Activated T-helper 1 cell treated with anti-CD3 and anti-CD28 coated beads, Interleukin-12 subunit alpha, Interleukin-12 subunit beta, Interleukin-2, Interleukin-4 antibody, amounts not matched to agents 30 ng/mL and 10 ng/mL and 1 ng/mL, durations not matched to agents 14 hours and 24 hours and 36 hours (primary cell): ENCODE measurements at regions of chr4 and their contacts with region 1.

Region 1: DNA sequence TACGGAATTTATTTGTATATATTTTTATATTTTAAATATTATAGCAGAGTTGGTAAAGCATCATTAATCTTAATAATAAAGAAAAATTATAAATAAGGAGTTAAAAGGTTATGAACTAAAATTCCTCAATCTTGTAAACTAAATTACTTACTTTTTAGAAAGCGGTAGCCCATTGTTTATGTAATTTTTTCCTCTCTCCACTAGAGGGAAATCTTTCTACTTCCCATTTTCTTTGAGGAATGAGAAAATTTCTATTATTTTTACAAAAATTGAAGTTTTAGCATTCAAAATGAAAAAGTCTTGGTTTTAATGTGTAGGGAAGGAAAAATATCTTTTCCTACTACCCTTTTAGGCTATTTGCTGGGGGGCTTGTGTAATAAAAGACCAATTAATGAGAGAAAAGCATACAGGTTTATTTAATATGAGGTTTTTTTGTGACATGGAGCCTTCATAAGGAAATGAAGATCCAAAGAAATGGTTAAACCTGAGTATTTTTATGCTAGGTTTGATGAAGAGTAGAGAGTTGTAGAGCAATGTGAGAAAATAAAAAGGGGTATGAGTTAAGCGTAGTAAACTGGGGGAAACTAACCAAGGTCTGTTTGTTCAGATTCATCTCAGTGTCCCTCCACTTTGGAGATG is 68.7 kb upstream of the ADAD1 start:
- DNase-seq: no peak
- H3K4me3 Mint-ChIP-seq: no peak overlapping the region
- H3K27ac Mint-ChIP-seq: no peak overlapping the region
- H3K4me1 Mint-ChIP-seq: peaks cover 6% of the 10 kb centered on the region
- H3K27me3 Mint-ChIP-seq: no peaks in the 10 kb centered on the region

Region 2: DNA sequence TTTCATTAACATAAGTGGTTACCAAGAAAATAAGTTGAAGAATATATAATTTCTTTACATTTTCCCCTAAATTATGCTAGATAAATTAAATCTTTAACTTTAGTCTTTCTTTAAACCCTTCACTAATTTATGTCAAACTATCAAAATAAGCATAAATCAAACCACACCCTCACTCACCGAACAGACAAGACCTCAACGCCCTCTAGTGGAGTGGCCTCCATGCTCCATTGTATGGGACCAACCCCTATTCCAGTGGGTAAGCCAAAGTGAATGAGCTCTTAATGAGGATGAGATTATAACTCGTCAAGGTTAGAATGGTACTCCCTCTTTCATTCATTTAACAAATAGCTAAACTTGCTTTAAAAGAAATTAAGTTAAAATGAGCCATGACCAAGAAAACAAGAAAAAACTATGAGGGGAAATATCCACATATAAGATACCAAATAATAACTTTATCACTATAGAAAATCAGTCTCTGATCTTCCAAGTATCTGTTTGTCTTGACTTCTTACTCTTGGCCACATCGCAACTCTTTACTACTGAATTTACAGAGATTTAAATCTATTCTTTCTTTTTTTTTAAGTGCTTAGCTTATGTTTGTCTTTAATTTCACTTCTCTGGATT is 406.8 kb after region 1 on chr4:
- intact Hi-C with region 1: loop called (anchors 10 kb)
- DNase-seq: peak; percentile 55
- H3K4me3 Mint-ChIP-seq: peak overlapping the region; percentile 25
- H3K27ac Mint-ChIP-seq: peak overlapping the region; percentile 81
- H3K4me1 Mint-ChIP-seq: peaks cover 46% of the 10 kb centered on the region
- H3K27me3 Mint-ChIP-seq: peaks cover 2% of the 10 kb centered on the region